ENCODE measurements at regions of chr12 and their contacts with region 1.

Region 1: DNA sequence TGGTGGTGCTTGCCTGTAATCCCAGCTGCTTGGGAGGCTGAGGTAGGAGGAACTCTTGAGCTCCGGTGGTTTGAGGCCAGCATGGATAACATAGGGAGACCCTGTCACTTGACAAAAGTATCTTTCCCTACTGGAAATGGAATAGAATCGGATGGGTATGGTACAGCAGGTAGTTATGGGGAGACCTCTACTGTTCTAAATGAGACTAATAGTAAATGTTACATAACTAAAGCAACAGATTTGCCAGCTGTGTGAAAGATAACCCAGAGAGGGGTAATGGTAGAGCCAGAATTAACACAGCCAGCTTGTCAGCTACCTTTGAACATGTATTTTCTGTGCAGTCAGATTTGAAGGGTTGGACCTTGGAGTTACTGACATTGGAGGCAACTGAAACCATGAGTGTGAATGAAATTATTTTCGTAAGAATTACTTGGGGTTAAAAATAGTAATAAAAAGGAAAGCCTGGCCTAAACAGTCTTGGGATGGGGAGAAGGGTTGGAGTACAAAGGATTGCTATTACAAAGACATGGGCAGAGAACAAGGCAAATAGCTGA is 21.7 kb upstream of the NUP107 start:
- DNase-seq: no peak
- ATAC-seq: no peak
- H3K4me3 ChIP-seq: no peak overlapping the region
- H3K4me3 Mint-ChIP-seq: no peak overlapping the region
- H3K27ac ChIP-seq: peak overlapping the region in 1 of 2 experiments; percentile 12
- H3K27ac Mint-ChIP-seq: peak overlapping the region; percentile 86
- H3K4me1 ChIP-seq: peaks cover 25% of the 10 kb centered on the region
- H3K4me1 Mint-ChIP-seq: peaks cover 40% of the 10 kb centered on the region
- H3K27me3 ChIP-seq: no peaks in the 10 kb centered on the region
- H3K27me3 Mint-ChIP-seq: no peaks in the 10 kb centered on the region
- CTCF ChIP-seq: no peak

Region 2: DNA sequence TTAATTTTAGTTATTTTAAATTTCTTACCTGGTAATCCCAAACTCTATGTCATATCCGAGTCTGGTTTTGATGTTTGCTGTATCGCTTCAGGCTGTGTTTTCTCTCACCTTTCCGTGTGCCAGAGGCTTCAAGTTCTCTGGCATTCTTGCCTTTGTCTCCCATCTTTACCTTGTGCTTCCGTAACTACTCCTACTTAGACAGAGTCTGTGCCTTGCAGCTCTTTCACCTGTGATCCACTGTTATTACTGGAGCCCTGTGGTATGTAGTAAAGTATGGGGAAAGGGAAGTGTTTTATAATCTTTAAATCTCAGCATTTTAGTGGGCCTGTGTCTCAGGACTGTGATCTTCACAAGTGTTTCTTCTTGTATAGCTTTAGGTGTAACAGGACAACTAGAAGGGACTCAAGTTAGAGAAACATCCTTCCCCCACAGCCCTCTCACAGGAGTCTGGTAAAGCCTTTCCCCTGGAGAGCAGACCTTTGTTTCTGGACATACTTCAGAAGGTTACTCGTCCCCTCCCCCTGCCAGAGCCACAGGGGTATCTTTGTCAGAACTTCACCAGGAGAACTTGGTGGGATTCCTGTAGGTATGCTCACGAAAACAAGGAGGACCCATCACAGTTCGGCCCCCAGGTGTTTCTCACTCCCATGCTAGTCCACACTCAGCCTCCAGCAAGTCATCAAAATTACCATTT is 516.7 kb before region 1 on chr12:
- CTCF ChIA-PET with region 1: no interaction called
- POLR2A ChIA-PET with region 1: no interaction called
- intact Hi-C with region 1: no loop called
- DNase-seq: no peak
- ATAC-seq: no peak
- H3K4me3 ChIP-seq: no peak overlapping the region
- H3K4me3 Mint-ChIP-seq: no peak overlapping the region
- H3K27ac ChIP-seq: no peak overlapping the region
- H3K27ac Mint-ChIP-seq: no peak overlapping the region
- H3K4me1 ChIP-seq: no peaks in the 10 kb centered on the region
- H3K4me1 Mint-ChIP-seq: peaks cover 3% of the 10 kb centered on the region
- H3K27me3 ChIP-seq: no peaks in the 10 kb centered on the region
- H3K27me3 Mint-ChIP-seq: no peaks in the 10 kb centered on the region
- CTCF ChIP-seq: no peak

Region 3: GRCh38 chr12:68623984-68624383 is 41.1 kb before region 1 on chr12:
- CTCF ChIA-PET with region 1: no interaction called
- POLR2A ChIA-PET with region 1: interaction called, 3 read pairs
- intact Hi-C with region 1: loop called in 1 of 2 experiments (anchors 5 kb)
- DNase-seq: no peak
- ATAC-seq: no peak
- H3K4me3 ChIP-seq: no peak overlapping the region
- H3K4me3 Mint-ChIP-seq: peak overlapping the region; percentile 35
- H3K27ac ChIP-seq: peak overlapping the region in 1 of 2 experiments; percentile 22
- H3K27ac Mint-ChIP-seq: peak overlapping the region; percentile 50
- H3K4me1 ChIP-seq: peaks cover 82% of the 10 kb centered on the region
- H3K4me1 Mint-ChIP-seq: peaks cover 84% of the 10 kb centered on the region
- H3K27me3 ChIP-seq: no peaks in the 10 kb centered on the region
- H3K27me3 Mint-ChIP-seq: no peaks in the 10 kb centered on the region
- CTCF ChIP-seq: no peak

Region 4: DNA sequence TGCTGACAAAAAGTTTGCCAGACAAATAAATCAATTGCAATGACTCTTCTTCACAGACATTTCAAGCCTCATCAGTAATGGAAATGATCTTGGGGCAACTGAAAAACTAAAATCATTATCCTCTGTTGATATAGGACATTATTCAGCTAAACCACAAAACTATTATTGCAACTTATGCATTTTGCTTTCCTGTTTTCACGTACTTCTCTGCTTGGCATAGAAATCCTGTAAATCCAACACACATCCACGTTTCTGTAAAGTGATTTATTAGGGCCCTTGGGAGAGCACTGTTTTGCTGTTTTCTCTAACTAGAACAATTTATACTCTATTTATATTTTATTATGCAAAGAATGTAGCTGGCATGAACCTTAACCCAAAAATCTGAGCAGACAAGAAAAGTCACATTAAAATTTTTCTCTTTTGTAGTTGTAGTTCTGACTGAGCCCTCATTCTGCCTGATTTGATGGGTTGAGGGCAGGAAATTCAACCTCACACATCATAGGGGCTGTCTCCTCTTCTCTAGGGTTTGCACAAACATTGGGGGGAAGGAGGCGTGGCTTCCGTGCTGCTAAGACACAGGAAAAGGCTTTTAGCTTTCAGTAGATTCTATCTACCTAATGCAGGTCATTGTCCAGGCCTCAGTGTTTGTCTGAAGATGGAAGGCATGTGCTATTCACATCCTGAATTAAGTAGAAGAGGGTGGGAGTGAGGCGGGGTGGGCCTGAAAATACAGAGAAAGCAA is 10.2 kb after region 1 on chr12:
- CTCF ChIA-PET with region 1: no interaction called
- POLR2A ChIA-PET with region 1: interaction called, 7 read pairs
- intact Hi-C with region 1: loop called in 1 of 2 experiments (anchors 1 kb)
- DNase-seq: peak; percentile 53 to 93 (median 84)
- ATAC-seq: peak; percentile 99
- H3K4me3 ChIP-seq: peak overlapping the region; percentile 4 to 47
- H3K4me3 Mint-ChIP-seq: peak overlapping the region; percentile 56
- H3K27ac ChIP-seq: peak overlapping the region; percentile 40 to 68
- H3K27ac Mint-ChIP-seq: peak overlapping the region; percentile 86
- H3K4me1 ChIP-seq: peaks cover 47% of the 10 kb centered on the region
- H3K4me1 Mint-ChIP-seq: peaks cover 60% of the 10 kb centered on the region
- H3K27me3 ChIP-seq: no peaks in the 10 kb centered on the region
- H3K27me3 Mint-ChIP-seq: no peaks in the 10 kb centered on the region
- CTCF ChIP-seq: no peak

Measured in CD8-positive, alpha-beta T cell (primary cell).